ENCODE measurements at regions of chr18 and their contacts with region 1.

Region 1: GRCh38 chr18:58541789-58542425 is 87.0 kb downstream of the ALPK2 start:
- DNase-seq: no peak
- ATAC-seq: peak; percentile 69
- H3K4me3 ChIP-seq: no peak overlapping the region
- H3K4me1 ChIP-seq: peaks cover 16% of the 10 kb centered on the region
- CTCF ChIP-seq: no peak

Region 2: DNA sequence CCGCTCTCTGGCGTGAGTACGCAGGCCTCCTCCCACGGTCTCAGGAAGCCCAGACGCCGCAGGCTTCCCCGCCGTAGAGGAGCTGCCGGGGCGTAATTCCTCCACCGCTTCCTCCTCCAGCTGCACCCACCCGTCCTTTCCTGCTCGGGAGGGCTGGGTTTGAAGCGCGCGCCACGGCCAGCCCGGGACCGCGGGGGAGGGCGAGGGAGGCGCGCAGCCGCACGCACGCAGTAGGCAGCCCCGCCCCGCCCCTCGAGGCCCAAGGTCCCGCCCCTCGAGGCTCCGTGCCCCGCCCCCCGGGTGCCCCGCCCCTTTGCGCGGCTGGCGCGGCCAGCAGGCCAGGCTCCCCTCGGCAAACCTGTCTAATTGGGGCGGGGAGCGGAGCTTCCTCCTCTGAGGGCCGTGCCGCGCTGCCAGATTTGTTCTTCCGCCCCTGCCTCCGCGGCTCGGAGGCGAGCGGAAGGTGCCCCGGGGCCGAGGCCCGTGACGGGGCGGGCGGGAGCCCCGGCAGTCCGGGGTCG is 129.3 kb after region 1 on chr18 and contains the start of gene MALT1:
- intact Hi-C with region 1: loop called in 1 of 2 experiments (anchors 10 kb)
- DNase-seq: peak; percentile 95 to 99 (median 98)
- ATAC-seq: peak; percentile 96
- H3K4me3 ChIP-seq: peak within 1 kb of the TSS; percentile 75
- H3K4me1 ChIP-seq: peaks cover 9% of the 10 kb centered on the region
- CTCF ChIP-seq: no peak
- total RNA-seq, gene MALT1: 19.5 to 23.4 (median 23.1) TPM

Measured in mucosa of descending colon (tissue), 3 donors.